Ascending aorta (tissue), 2 donors: ENCODE measurements at regions of chr14 and their contacts with region 1.

Region 1: DNA sequence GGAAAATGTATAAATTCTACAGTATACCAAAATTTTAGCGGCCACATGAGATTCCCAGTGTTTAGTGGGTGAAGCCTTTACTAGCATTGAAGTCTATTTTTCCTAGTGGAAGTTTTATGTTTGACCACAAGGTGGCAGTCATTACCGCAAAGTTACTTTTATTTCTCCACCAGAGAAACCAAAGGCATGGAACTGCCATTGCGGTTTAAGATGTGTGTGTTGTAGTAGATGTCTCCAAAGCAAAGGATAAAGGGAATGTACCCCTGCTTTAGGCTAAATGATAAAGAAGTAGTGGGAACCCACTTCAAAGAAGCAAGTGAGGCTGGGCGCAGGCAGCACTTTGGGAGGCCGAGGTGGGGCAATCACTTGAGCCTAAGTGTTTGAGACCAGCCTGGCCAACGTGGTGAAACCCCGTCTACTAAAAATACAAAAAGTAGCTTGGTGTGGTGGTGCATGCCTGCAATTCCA is 140.5 kb downstream of the PRKCH start:
- DNase-seq: no peak
- H3K4me3 ChIP-seq: no peak overlapping the region
- H3K27ac ChIP-seq: no peak overlapping the region
- H3K4me1 ChIP-seq: no peaks in the 10 kb centered on the region
- H3K27me3 ChIP-seq: no peaks in the 10 kb centered on the region
- CTCF ChIP-seq: peak; percentile 65 to 75 (median 74)

Region 2: GRCh38 chr14:61493239-61493638 is 31.4 kb after region 1 on chr14:
- intact Hi-C with region 1: no loop called
- DNase-seq: no peak
- H3K4me3 ChIP-seq: no peak overlapping the region
- H3K27ac ChIP-seq: no peak overlapping the region
- H3K4me1 ChIP-seq: peaks cover under 1 to 7% of the 10 kb centered on the region in 2 donors
- H3K27me3 ChIP-seq: no peaks in the 10 kb centered on the region
- CTCF ChIP-seq: no peak

Region 3: GRCh38 chr14:61730756-61731373 is 269.0 kb after region 1 on chr14:
- intact Hi-C with region 1: loop called (anchors 2 kb)
- DNase-seq: no peak
- H3K4me3 ChIP-seq: no peak overlapping the region
- H3K27ac ChIP-seq: no peak overlapping the region
- H3K4me1 ChIP-seq: no peaks in the 10 kb centered on the region
- H3K27me3 ChIP-seq: no peaks in the 10 kb centered on the region
- CTCF ChIP-seq: peak; percentile 11 to 46 (median 11)

Region 4: GRCh38 chr14:61761959-61762786 is 300.3 kb after region 1 on chr14 and contains the start of gene SNAPC1:
- intact Hi-C with region 1: loop called (anchors 5 kb)
- DNase-seq: peak; percentile 86 to 98
- H3K4me3 ChIP-seq: peak within 1 kb of the TSS; percentile 86 to 91
- H3K27ac ChIP-seq: peak within 1 kb of the TSS; percentile 79 to 82
- H3K4me1 ChIP-seq: peaks cover 0 to 16% of the 10 kb centered on the region in 2 donors
- H3K27me3 ChIP-seq: no peaks in the 10 kb centered on the region
- CTCF ChIP-seq: no peak
- total RNA-seq, gene SNAPC1: 2.7 TPM

Region 5: GRCh38 chr14:61837336-61838229 is 375.7 kb after region 1 on chr14:
- intact Hi-C with region 1: loop called (anchors 1 kb)
- DNase-seq: peak; percentile 14 to 84
- H3K4me3 ChIP-seq: no peak overlapping the region
- H3K27ac ChIP-seq: no peak overlapping the region
- H3K4me1 ChIP-seq: no peaks in the 10 kb centered on the region
- H3K27me3 ChIP-seq: no peaks in the 10 kb centered on the region
- CTCF ChIP-seq: peak; percentile 83 to 96 (median 90)